Posterior cingulate gyrus (tissue), 11 donors: ENCODE measurements at regions of chr22 and their contacts with region 1.

Region 1: DNA sequence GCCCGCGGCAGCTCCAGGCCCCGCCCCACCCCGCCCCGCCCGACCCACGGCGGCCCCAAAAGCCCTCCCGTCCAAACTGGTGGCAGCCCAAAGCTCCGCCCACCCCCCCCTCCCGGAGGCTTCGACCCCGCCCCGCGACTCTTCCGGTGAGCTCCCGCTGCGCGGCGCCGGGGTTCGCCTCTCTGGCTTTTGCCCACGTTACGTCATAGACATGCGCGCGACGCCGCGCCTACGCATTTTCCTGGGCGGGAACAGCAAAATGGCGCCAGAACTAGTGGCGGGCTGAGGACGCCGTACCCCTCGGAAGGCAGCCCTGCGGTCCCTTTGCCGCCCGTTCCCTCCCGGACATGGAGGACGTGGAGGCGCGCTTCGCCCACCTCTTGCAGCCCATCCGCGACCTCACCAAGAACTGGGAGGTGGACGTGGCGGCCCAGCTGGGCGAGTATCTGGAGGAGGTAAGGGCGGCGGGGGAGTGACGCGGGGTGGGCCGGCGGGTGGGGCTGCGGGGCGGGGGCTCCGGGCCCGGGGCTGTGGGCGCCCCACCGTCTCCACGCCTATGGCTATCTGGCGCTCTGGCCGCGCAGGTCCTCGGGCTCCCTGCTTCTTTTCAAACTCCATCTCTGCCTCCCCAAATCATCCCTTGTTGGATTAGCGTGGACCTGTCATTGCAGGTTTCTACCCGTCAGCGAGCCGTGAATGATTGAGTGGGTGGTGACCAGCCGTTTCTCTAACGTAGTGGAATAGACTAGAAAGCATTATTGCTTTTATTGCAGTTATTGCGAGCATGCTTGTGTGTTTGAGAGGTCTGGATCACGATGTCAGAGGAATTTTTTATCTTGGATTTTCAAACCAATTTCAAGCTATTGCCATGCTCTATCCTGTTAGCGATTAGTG is at the start of gene NCAPH2:
- DNase-seq: peak; percentile 93 to 99 (median 96)

Region 2: GRCh38 chr22:50244420-50245213 is 263.6 kb before region 1 on chr22 and contains the start of gene TUBGCP6:
- intact Hi-C with region 1: loop called (anchors 10 kb)
- DNase-seq: peak; percentile 91 to 99 (median 96)

Region 3: DNA sequence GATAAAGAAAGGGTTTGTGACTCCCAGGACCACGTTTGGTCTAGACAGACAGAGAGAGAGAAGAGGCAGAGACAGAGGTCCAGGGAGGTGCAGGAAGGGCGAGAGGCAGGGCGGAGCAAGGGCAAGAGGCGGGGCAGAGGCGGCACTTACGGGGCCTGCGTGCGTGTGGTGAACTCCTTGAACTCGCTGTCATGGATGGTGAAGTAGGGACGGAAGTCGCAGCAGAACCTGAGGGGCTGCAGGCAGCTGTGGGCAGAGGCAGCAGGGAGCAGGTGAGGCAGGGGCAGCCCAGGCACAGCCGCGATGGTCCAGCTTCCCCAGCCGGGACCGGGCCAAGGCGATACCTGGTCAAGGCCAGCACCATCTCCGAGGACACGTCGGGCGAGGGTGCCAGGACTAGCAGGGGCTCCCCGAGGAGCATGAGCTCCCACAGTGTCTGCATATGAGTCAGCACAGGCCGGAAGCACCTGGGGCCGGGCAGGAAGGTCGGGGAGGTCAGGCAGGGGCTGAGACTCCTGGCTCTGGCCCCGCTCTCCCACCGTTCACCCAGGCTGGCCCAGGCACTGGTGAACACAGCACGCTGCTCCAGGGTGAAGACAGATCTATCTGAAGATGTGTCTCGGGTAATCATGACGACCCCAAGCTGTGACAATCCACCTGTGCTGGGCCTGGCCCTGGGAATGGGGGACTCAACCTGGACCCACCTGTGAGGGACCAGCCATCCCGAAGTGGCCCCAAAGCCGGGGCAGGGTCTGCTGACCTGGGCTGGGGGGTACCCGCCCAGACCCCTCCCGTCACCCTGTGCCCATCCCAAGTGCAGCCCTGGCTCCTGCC is 193.6 kb before region 1 on chr22:
- intact Hi-C with region 1: no loop called
- DNase-seq: peak in 2 of 10 donors; percentile 26 to 71

Region 4: GRCh38 chr22:50525390-50526068 is 17.3 kb after region 1 on chr22 and contains the start of gene SCO2:
- intact Hi-C with region 1: loop called (anchors 2 kb)
- DNase-seq: peak; percentile 90 to 99 (median 92)